ENCODE measurements at regions of chr10 and their contacts with region 1.

Region 1: DNA sequence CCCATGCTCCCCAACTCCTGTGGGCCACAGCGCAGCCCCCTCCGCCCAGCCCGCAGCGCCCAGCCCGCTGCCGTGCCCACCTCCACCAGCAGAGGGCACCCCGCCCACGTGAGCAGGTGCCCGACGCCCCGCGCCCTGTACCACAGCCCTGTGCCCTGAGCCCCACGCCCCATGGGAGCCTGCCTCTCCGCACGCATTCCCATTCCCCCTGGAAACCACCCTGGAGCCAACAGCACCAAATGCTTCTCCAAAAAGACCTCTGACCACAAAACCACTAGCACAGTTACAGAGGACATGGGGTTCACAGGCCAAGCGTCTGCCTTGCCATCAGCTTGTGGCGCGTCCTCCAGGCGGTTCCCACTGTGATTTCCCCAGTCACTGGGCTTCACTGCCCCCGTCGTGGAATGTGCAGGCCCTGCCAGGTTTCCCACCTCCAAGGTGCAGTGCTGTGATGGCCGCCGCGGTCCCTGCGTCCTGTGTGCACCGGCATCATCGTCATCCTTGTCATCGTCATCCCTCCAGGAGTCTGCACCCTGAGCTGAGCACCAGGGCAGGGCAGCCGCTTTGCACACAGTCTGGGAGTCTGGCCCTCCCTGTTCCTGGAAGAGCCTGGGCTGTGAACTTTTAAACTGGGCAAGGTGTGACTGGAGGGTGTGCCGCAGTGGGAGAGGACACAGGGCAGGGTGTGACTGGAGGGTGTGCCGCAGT is 61.7 kb downstream of the PWWP2B start:
- DNase-seq: no peak
- ATAC-seq: peak; percentile 90
- H3K4me3 ChIP-seq: no peak overlapping the region
- H3K27ac ChIP-seq: no peak overlapping the region
- H3K4me1 ChIP-seq: no peaks in the 10 kb centered on the region
- H3K27me3 ChIP-seq: no peaks in the 10 kb centered on the region; a peak in 2 of 4 replicates
- CTCF ChIP-seq: peak; percentile 82 to 95 (median 90)
- EP300 ChIP-seq: no peak
- POLR2A ChIP-seq: no peak
- RAD21 ChIP-seq: peak; percentile 87

Region 2: DNA sequence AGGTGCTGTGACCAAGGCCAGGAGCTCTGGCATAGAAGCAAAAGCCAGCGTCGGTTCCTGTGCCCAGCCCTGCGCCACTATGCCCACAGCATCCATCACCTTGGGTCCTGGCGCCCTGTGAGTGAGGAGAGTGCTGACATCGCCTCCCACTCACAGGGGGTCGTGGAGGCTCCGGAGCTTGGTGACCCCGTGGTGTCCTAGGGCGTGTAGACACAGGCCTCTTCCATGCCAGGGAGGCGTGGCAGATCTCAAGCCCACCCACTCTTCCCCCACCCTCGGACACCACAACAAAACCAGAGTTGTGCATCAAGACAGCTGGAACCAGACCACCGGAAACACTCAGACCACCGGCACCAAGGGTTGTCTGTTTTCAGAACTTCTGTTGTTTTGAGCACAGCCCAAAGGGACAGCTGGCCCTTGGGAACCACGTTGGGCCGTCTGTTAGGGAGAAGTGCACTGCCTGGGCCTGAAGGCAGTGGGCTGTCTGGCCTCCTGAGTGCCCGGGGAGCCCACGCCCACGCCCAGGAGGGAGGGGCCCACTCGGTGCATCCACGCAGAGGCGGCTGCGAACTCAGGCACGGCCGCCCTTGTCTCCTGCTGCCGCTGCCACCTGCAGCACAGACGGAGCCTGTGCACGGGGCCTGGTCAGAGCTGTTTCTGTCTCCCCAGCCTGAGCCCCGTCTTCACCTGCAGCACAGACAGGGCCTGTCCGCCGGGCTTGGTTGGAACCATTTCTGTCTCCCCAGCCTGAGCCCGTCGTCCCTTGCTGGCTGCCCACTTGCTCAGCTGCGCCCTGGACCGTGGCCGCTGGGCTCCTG is 185.2 kb after region 1 on chr10:
- CTCF ChIA-PET with region 1: interaction called, 11 read pairs
- POLR2A ChIA-PET with region 1: no interaction called
- RAD21 ChIA-PET with region 1: interaction called, 3 read pairs
- SMC1A ChIA-PET with region 1: interaction called, 16 read pairs
- in situ Hi-C with region 1: loop called (anchors 5 kb)
- intact Hi-C with region 1: no loop called
- DNase-seq: no peak
- ATAC-seq: peak; percentile 57
- H3K4me3 ChIP-seq: no peak overlapping the region
- H3K27ac ChIP-seq: no peak overlapping the region
- H3K4me1 ChIP-seq: no peaks in the 10 kb centered on the region
- H3K27me3 ChIP-seq: no peaks in the 10 kb centered on the region
- CTCF ChIP-seq: no peak
- EP300 ChIP-seq: no peak
- POLR2A ChIP-seq: no peak
- RAD21 ChIP-seq: no peak

Region 3: DNA sequence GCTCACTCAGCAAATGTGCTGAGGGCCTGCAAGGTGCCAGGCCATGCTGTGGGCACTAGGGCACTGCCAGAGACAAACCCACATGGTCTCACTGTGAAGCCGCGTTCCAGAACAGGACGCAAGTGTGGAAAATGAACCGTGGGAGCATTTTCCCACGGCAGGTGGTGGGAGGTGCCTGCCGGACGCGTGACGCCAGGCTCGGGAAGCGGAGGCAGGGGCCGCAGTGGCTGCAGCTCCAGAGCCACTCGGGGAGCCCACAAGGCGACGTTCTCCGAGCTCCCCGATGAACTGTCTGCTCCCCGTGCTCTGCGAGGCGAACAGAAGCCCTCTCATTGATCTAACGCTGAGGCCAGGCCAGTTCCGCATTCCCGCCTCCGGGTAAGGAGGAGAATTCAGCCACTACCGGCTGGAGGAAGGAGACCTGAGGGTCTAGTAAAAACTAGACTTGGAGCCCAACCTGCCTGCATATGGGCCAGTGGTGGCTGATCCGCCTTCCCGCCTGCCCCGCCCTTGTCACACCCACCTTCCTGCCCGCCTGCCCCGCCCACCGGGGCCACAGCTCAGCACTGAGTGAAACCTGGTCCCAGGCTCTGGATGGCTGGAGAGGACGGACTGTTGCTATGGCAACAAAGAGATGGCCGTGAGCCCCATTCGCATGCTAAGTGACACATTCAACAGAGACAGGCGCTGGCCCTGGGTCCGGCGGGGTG is 642.1 kb after region 1 on chr10:
- CTCF ChIA-PET with region 1: no interaction called
- POLR2A ChIA-PET with region 1: no interaction called
- RAD21 ChIA-PET with region 1: no interaction called
- SMC1A ChIA-PET with region 1: no interaction called
- in situ Hi-C with region 1: no loop called
- intact Hi-C with region 1: no loop called
- DNase-seq: no peak
- ATAC-seq: no peak
- H3K4me3 ChIP-seq: no peak overlapping the region
- H3K27ac ChIP-seq: no peak overlapping the region
- H3K4me1 ChIP-seq: no peaks in the 10 kb centered on the region
- H3K27me3 ChIP-seq: no peaks in the 10 kb centered on the region
- CTCF ChIP-seq: no peak
- EP300 ChIP-seq: no peak
- POLR2A ChIP-seq: no peak
- RAD21 ChIP-seq: no peak